Activated CD8-positive, alpha-beta T cell treated with anti-CD3 and anti-CD28 coated beads for 36 hours (primary cell): ENCODE measurements at regions of chr9 and their contacts with region 1.

Region 1: DNA sequence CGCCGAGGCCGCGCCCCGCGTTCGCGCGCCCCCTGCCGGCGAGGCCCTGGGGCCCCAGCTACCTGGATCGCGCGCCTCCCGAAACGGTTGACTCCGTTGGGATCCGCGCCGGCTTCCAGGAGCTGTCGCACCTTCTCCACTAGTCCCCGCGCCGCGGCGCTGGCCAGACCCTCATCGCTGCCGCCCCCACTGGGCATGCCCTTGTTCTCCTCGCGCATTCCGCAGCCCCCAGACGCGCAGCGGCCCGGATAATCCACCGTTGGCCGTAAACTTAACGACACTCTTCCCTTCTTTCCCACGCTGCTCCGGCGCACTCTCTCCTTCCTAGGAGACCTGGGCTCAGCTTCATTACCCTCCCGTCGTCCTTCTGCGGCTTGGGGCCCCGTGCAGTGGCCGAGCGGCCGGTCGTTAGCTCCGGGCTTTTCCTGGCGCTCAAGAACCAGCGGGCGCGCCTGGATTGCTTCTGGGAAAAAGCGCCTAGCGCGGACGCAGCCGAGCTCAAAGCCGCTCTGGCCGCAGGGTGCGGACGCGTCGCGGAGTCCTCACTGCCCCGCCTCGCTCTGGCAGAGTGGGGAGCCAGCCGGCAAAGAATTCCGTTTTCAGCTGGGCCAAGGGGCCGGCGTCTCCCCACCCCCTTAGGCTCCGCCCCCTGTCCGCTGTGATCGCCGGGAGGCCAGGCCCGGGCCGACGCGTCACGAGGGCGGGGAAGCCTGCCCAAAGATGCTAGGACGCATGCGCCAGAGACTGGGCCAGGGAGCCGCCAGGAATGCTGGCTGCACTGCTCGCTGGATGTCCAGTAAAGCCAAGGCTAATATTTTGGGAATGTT is at the start of gene CDKN2B:
- DNase-seq: peak; percentile 71
- ATAC-seq: peak; percentile 89
- H3K4me3 Mint-ChIP-seq: peak within 1 kb of the TSS; percentile 72
- H3K27ac Mint-ChIP-seq: no peak within 1 kb of the TSS
- H3K4me1 Mint-ChIP-seq: peaks cover 21% of the 10 kb centered on the region
- H3K27me3 Mint-ChIP-seq: peaks cover 55% of the 10 kb centered on the region
- CTCF ChIP-seq: peak; percentile 78
- total RNA-seq, gene CDKN2B: not detected

Region 2: DNA sequence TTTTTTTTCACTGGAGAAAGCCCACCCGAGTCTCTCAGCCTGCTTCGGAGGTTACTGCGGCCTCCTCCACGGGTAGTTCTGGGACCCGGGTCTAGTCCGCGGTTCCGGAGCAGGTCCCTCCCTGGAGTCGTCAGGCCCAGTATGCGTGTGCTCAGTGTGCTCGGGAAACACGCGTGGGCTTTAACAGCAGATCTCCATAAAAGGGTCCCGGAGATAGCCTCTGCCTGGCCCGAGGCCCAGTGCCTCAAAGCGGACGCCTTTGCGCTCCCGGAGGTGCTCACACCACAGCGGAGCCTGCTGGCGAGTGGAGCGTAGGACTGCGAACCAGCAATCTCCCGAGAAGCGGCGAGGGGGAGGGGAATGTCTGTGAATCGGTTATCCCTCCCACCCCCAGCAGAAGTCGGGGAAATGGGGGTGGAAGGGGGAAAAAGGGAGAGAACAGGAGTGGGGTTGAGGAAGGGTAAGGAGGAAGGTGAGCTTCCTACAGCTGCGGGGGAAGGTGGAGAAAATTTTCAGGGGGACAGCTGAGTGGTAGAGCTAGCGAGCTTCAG is 43.5 kb before region 1 on chr9:
- CTCF ChIA-PET with region 1: interaction called, 37 read pairs
- POLR2A ChIA-PET with region 1: interaction called, 3 read pairs
- intact Hi-C with region 1: loop called (anchors 5 kb)
- DNase-seq: peak; percentile 64
- ATAC-seq: peak; percentile 75
- H3K4me3 Mint-ChIP-seq: peak overlapping the region; percentile 45
- H3K27ac Mint-ChIP-seq: no peak overlapping the region
- H3K4me1 Mint-ChIP-seq: peaks cover 7% of the 10 kb centered on the region
- H3K27me3 Mint-ChIP-seq: peaks cover 90% of the 10 kb centered on the region
- CTCF ChIP-seq: peak; percentile 18

Region 3: GRCh38 chr9:21985964-21986667 is 22.8 kb before region 1 on chr9:
- CTCF ChIA-PET with region 1: interaction called, 37 read pairs
- POLR2A ChIA-PET with region 1: interaction called, 5 read pairs
- intact Hi-C with region 1: no loop called
- DNase-seq: no peak
- ATAC-seq: no peak
- H3K4me3 Mint-ChIP-seq: no peak overlapping the region
- H3K27ac Mint-ChIP-seq: no peak overlapping the region
- H3K4me1 Mint-ChIP-seq: peaks cover 4% of the 10 kb centered on the region
- H3K27me3 Mint-ChIP-seq: peaks cover 63% of the 10 kb centered on the region
- CTCF ChIP-seq: no peak

Region 4: DNA sequence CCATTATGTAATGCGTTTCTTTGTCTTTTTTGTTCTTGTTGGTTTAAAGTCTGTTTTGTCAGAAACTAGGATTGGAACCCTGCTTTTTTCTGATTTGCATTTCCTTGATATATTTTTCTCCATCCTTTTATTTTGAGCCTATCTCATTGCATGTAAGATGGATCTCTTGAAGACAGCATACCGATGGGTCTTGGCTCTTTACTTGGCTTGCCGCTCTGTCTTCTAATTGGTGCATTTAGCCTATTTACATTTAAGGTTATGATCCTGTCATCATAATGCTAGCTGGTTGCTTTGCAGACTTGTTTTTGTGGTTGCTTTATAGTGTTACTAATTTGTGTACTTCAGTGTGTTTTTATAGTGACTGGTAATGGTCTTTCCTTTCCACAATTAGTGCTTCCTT is 13.4 kb after region 1 on chr9:
- CTCF ChIA-PET with region 1: interaction called, 24 read pairs
- POLR2A ChIA-PET with region 1: no interaction called
- intact Hi-C with region 1: no loop called
- DNase-seq: no peak
- ATAC-seq: no peak
- H3K4me3 Mint-ChIP-seq: no peak overlapping the region
- H3K27ac Mint-ChIP-seq: no peak overlapping the region
- H3K4me1 Mint-ChIP-seq: no peaks in the 10 kb centered on the region
- H3K27me3 Mint-ChIP-seq: peaks cover 24% of the 10 kb centered on the region
- CTCF ChIP-seq: no peak

Region 5: DNA sequence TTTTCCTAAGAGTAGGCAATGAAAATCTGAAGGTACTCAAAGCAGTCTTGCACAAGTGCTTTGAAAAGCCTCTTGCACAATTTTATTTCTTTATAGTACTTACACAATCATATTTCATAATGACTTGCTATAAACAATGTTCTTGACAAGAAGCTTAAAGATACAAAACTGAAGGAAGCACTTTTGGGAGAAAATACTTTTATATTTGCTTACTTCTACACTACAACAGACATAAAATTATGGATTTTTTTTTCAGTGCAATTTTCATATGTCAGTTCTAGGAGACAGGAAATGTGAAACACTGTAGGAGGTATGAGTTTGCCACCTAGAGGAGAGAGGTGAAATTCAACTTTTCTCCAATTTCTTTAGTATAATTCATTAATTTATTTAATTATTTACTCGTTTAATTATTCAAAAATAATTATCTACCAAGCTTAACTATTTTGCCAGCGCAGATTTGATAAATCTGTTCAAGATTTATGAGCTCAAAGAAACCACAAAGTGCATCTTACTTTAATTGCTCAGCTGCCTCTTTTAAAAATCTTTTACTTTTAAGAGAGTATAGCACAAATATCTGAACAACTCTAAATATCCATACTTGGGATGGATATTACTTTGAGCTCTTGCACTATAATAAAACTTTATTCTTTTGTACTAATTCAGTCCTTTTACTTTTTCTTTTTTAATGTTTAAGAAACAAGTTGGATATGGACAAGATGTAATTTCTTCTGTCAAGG is 29.2 kb after region 1 on chr9:
- CTCF ChIA-PET with region 1: interaction called, 62 read pairs
- POLR2A ChIA-PET with region 1: no interaction called
- intact Hi-C with region 1: no loop called
- DNase-seq: no peak
- ATAC-seq: peak; percentile 47
- H3K4me3 Mint-ChIP-seq: no peak overlapping the region
- H3K27ac Mint-ChIP-seq: no peak overlapping the region
- H3K4me1 Mint-ChIP-seq: peaks cover 23% of the 10 kb centered on the region
- H3K27me3 Mint-ChIP-seq: no peaks in the 10 kb centered on the region
- CTCF ChIP-seq: peak; percentile 83

Region 6: DNA sequence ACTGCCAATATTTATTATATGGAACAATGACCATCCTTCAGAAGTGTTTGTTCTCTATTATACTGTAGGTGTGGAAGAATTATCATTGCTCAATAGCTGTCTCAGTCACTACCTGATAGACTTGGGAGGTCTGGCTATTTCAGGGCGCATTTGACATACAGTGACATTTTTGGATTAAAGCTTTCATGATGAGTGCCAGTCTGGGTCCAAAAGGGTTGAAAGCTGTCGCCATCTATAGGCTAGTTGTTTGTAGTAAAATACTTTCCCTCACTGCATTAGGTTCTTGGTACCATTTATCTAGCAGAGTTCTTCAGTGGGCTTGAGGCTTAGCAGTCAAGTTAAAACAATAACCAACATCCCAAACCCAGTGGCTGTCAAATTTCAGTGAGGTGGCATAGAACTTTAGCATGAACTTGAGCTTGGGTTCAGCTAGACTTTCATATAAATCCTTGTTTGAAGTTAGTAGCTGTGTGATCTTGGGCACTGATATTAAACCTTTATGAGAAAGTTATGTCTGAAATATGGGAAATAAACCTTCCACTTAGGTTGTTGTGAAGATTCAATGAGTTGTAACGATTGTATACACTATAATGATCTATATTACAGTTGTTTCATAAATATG is 110.7 kb after region 1 on chr9:
- CTCF ChIA-PET with region 1: interaction called, 24 read pairs
- POLR2A ChIA-PET with region 1: no interaction called
- intact Hi-C with region 1: no loop called
- DNase-seq: peak; percentile 33
- ATAC-seq: peak; percentile 80
- H3K4me3 Mint-ChIP-seq: no peak overlapping the region
- H3K27ac Mint-ChIP-seq: no peak overlapping the region
- H3K4me1 Mint-ChIP-seq: peaks cover 3% of the 10 kb centered on the region
- H3K27me3 Mint-ChIP-seq: peaks cover 18% of the 10 kb centered on the region
- CTCF ChIP-seq: peak; percentile 40